Uterus (tissue), 4 donors: ENCODE measurements at regions of chr5 and their contacts with region 1.

Region 1: GRCh38 chr5:34474573-34475021 is 181.5 kb upstream of the RAI14 start:
- DNase-seq: peak in 1 of 2 donors; percentile 42
- H3K4me3 ChIP-seq: no peak overlapping the region
- H3K27ac ChIP-seq: no peak overlapping the region
- H3K4me1 ChIP-seq: peaks cover 0 to 6% of the 10 kb centered on the region in 2 donors
- H3K27me3 ChIP-seq: no peaks in the 10 kb centered on the region
- CTCF ChIP-seq: peak; percentile 92 to 95 (median 94)
- POLR2A ChIP-seq: no peak

Region 2: GRCh38 chr5:34898258-34898895 is 423.8 kb after region 1 on chr5:
- intact Hi-C with region 1: loop called (anchors 5 kb)
- DNase-seq: peak; percentile 71 to 77
- H3K4me3 ChIP-seq: no peak overlapping the region
- H3K27ac ChIP-seq: no peak overlapping the region
- H3K4me1 ChIP-seq: no peaks in the 10 kb centered on the region
- H3K27me3 ChIP-seq: peaks cover 0 to 2% of the 10 kb centered on the region in 2 donors
- CTCF ChIP-seq: peak; percentile 82 to 92 (median 85)
- POLR2A ChIP-seq: no peak